ENCODE measurements at regions of chr10 and their contacts with region 1.

Region 1: DNA sequence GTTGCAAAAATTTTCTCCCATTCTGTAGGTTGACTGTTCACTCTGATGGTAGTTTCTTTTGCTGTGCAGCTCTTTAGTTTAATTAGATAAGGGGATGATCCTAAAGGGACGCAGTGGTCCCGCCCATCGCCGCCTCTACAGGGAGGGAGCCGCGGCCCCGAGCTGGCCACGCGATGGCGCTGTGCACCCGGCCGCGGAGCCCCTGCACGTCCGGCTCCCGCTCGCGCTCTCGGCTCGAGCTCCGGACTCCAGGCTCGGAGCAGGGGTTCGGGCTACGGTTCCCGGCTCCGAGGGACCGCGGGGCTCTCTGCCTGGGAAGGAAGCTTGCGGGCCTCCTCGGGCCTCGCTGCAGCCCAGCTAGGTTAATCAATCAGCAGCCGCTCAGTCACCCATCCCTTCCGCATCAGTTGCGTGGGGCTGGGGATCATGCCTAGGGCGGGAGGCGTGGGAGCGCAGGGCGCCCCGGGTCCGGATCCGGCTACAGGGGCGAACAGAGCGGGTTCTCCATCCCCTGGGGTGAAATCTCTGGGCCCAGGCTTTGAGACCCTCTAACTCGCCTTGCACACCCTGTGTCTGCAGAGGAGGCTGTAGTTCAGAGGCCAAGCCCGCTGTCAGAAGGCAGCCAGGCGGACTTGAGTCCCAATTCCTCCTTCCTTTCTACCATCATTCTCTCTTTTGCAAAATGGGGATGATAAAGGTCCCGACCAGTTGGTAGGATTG is 97.9 kb downstream of the WDR11 start:
- DNase-seq: peak; percentile 65
- ATAC-seq: peak; percentile 99
- H3K4me3 ChIP-seq: peak overlapping the region; percentile 27; the same call in 1 of the 2 replicates
- H3K27ac ChIP-seq: no peak overlapping the region
- H3K4me1 ChIP-seq: no peaks in the 10 kb centered on the region
- H3K27me3 ChIP-seq: peaks cover 26% of the 10 kb centered on the region
- CTCF ChIP-seq: peak; percentile 67

Region 2: GRCh38 chr10:121426307-121426706 is 477.3 kb after region 1 on chr10:
- CTCF ChIA-PET with region 1: no interaction called
- POLR2A ChIA-PET with region 1: no interaction called
- intact Hi-C with region 1: no loop called
- DNase-seq: peak; percentile 19
- ATAC-seq: no peak
- H3K4me3 ChIP-seq: no peak overlapping the region
- H3K27ac ChIP-seq: no peak overlapping the region
- H3K4me1 ChIP-seq: no peaks in the 10 kb centered on the region
- H3K27me3 ChIP-seq: peaks cover 21% of the 10 kb centered on the region; the same call in 1 of the 2 replicates
- CTCF ChIP-seq: no peak

Region 3: DNA sequence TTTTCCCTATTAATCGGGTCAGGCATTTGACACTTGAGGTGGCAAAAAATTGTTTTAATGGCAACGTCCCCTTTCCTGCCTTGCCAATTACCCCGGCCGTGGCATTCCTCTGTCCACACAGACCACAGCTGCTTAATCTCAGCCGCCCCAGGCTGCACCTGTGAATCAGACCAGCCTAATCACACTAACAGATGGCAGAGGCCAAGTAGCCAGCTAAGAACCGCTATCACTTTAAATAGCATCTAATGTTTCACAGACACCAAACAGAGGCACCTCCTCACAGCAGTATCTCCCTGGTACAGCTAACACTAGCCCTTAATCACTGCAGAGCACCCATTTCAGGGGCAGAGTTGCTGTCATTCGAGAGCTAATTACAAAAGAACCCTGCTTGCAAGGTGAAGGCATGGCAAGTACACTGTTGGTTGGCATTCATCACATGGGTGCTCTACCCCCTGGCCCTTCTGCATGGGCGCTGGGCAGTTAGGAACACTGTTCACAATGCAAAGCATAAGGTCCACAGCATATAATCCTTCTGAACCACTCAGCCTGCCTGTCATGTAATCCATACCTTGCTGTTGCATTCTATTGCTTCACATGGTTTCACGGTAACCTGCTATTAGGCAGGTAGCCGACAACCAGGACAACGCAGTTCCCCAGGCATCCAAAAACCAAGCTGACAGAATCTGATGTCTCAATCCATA is 610.4 kb after region 1 on chr10:
- CTCF ChIA-PET with region 1: no interaction called
- POLR2A ChIA-PET with region 1: no interaction called
- intact Hi-C with region 1: no loop called
- DNase-seq: no peak
- ATAC-seq: no peak
- H3K4me3 ChIP-seq: no peak overlapping the region
- H3K27ac ChIP-seq: no peak overlapping the region
- H3K4me1 ChIP-seq: no peaks in the 10 kb centered on the region
- H3K27me3 ChIP-seq: peaks cover 63% of the 10 kb centered on the region
- CTCF ChIP-seq: no peak

Region 4: DNA sequence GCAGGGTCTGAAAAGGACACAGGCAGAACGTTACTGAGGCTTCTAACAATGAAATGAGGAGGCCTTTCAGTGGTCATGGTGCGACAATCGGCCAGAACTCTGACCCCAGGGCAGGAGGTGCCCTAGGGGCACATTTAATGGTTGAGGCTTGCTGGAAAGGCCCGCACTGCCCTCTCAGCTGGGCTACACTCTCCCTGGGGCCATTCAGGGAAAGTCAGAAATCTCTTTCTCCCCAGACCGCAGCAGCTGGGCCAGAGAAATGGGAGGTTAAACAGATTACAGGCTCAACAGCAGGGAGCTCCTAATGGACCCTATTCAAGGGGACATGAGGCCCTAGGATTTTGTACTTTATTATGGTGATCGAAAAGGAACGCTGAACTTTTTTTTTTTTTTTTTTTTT is 734.8 kb after region 1 on chr10:
- CTCF ChIA-PET with region 1: interaction called, 21 read pairs
- POLR2A ChIA-PET with region 1: no interaction called
- intact Hi-C with region 1: no loop called
- DNase-seq: no peak
- ATAC-seq: no peak
- H3K4me3 ChIP-seq: no peak overlapping the region
- H3K27ac ChIP-seq: no peak overlapping the region
- H3K4me1 ChIP-seq: no peaks in the 10 kb centered on the region
- H3K27me3 ChIP-seq: peaks cover 54% of the 10 kb centered on the region
- CTCF ChIP-seq: no peak

Region 5: DNA sequence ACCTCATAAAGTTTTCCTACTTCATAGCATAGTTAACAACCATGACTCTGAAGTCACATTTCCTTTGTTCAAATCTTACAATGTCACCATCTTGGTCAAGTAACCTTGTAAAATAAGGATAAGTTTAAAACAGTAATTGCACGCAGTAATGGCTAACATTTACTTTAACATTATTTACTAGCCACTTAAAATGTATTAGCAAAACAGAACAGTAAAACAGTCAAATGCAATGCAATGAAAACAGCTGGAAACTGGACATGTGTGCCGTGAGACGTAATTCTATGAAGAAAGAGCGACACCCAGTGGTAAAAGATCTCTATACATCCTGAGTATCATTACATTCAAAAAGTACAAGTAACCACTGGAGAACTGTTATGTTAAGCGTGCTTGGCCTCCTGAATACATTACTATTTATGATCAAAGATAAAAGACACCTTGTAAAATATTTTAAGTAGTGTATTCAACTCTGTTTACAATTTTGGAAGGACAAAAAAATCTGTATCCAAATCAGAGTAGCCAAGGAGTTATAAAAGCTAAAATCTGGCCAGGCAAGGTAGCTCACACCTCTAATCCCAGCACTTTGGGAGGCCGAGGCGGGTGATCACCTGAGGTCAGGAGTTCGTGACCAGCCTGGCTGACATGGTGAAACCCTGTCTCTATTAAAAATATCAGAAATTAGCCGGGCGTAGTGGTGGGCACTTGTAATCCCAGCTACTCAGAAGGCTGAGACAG is 951.6 kb after region 1 on chr10:
- CTCF ChIA-PET with region 1: no interaction called
- POLR2A ChIA-PET with region 1: no interaction called
- intact Hi-C with region 1: loop called (anchors 5 kb)
- DNase-seq: peak; percentile 72
- ATAC-seq: peak; percentile 78
- H3K4me3 ChIP-seq: no peak overlapping the region
- H3K27ac ChIP-seq: no peak overlapping the region
- H3K4me1 ChIP-seq: no peaks in the 10 kb centered on the region
- H3K27me3 ChIP-seq: no peaks in the 10 kb centered on the region
- CTCF ChIP-seq: peak; percentile 76